ENCODE measurements at regions of chr12 and their contacts with region 1.

Region 1: GRCh38 chr12:30251546-30251945 is 444.1 kb downstream of the IPO8 start:
- DNase-seq: no peak
- ATAC-seq: no peak
- H3K4me3 ChIP-seq: no peak overlapping the region
- H3K4me3 Mint-ChIP-seq: no peak overlapping the region
- H3K27ac ChIP-seq: no peak overlapping the region
- H3K27ac Mint-ChIP-seq: no peak overlapping the region
- H3K4me1 ChIP-seq: no peaks in the 10 kb centered on the region
- H3K4me1 Mint-ChIP-seq: no peaks in the 10 kb centered on the region
- H3K27me3 ChIP-seq: no peaks in the 10 kb centered on the region
- H3K27me3 Mint-ChIP-seq: no peaks in the 10 kb centered on the region
- CTCF ChIP-seq: no peak

Region 2: DNA sequence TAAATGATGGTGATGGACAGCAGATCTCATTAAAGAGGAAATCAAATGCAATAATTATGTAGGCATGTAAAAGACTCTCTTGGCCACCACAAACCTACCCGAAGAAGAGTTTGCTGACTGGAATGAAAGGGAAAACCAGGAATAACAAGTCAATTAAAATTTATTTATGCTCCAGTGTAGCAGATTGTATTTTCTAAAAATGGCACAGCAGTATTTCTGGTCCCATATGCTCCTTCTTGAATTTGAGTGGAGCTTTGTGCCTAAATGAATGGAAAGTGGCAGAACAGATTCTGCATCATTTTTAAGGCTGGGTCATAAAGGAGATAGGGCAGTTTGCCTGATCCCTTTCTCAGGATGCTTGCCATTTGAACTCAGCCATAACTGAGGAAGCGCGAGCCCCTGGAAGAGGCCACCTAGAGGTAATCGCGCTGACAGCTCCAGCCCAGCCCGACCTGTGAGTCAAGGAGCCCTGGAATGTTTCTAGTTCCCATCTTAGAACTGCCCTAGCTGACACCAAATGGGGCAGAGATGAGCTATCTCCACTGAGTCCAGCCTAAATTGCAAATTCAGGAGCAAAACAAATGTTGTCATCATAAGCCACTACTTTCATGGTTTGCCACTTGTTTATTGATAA is 238.6 kb before region 1 on chr12:
- CTCF ChIA-PET with region 1: no interaction called
- POLR2A ChIA-PET with region 1: no interaction called
- intact Hi-C with region 1: no loop called
- DNase-seq: no peak
- ATAC-seq: no peak
- H3K4me3 ChIP-seq: no peak overlapping the region
- H3K4me3 Mint-ChIP-seq: no peak overlapping the region
- H3K27ac ChIP-seq: no peak overlapping the region
- H3K27ac Mint-ChIP-seq: no peak overlapping the region
- H3K4me1 ChIP-seq: no peaks in the 10 kb centered on the region
- H3K4me1 Mint-ChIP-seq: no peaks in the 10 kb centered on the region
- H3K27me3 ChIP-seq: no peaks in the 10 kb centered on the region
- H3K27me3 Mint-ChIP-seq: peaks cover 2% of the 10 kb centered on the region
- CTCF ChIP-seq: no peak

Region 3: GRCh38 chr12:30323008-30323407 is 71.5 kb after region 1 on chr12:
- CTCF ChIA-PET with region 1: no interaction called
- POLR2A ChIA-PET with region 1: no interaction called
- intact Hi-C with region 1: no loop called
- DNase-seq: no peak
- ATAC-seq: no peak
- H3K4me3 ChIP-seq: no peak overlapping the region
- H3K4me3 Mint-ChIP-seq: no peak overlapping the region
- H3K27ac ChIP-seq: no peak overlapping the region
- H3K27ac Mint-ChIP-seq: no peak overlapping the region
- H3K4me1 ChIP-seq: no peaks in the 10 kb centered on the region
- H3K4me1 Mint-ChIP-seq: no peaks in the 10 kb centered on the region
- H3K27me3 ChIP-seq: no peaks in the 10 kb centered on the region
- H3K27me3 Mint-ChIP-seq: no peaks in the 10 kb centered on the region
- CTCF ChIP-seq: no peak

Region 4: GRCh38 chr12:30345744-30346471 is 94.4 kb after region 1 on chr12:
- CTCF ChIA-PET with region 1: interaction called, 3 read pairs
- POLR2A ChIA-PET with region 1: no interaction called
- intact Hi-C with region 1: loop called in 1 of 2 experiments (anchors 2 kb)
- DNase-seq: no peak
- ATAC-seq: no peak
- H3K4me3 ChIP-seq: no peak overlapping the region
- H3K4me3 Mint-ChIP-seq: no peak overlapping the region
- H3K27ac ChIP-seq: no peak overlapping the region
- H3K27ac Mint-ChIP-seq: no peak overlapping the region
- H3K4me1 ChIP-seq: no peaks in the 10 kb centered on the region
- H3K4me1 Mint-ChIP-seq: no peaks in the 10 kb centered on the region
- H3K27me3 ChIP-seq: no peaks in the 10 kb centered on the region
- H3K27me3 Mint-ChIP-seq: no peaks in the 10 kb centered on the region
- CTCF ChIP-seq: no peak

Measured in CD8-positive, alpha-beta T cell (primary cell).